PC-3 (cell line): ENCODE measurements at regions of chr7 and their contacts with region 1.

Region 1: GRCh38 chr7:47945261-47946001 is 2.8 kb downstream of the PKD1L1 start:
- DNase-seq: peak; percentile 77
- ATAC-seq: peak; percentile 52
- H3K4me3 ChIP-seq: no peak overlapping the region
- H3K27ac ChIP-seq: no peak overlapping the region
- H3K4me1 ChIP-seq: peaks cover 19% of the 10 kb centered on the region
- H3K27me3 ChIP-seq: no peaks in the 10 kb centered on the region
- CTCF ChIP-seq: peak; percentile 91

Region 2: DNA sequence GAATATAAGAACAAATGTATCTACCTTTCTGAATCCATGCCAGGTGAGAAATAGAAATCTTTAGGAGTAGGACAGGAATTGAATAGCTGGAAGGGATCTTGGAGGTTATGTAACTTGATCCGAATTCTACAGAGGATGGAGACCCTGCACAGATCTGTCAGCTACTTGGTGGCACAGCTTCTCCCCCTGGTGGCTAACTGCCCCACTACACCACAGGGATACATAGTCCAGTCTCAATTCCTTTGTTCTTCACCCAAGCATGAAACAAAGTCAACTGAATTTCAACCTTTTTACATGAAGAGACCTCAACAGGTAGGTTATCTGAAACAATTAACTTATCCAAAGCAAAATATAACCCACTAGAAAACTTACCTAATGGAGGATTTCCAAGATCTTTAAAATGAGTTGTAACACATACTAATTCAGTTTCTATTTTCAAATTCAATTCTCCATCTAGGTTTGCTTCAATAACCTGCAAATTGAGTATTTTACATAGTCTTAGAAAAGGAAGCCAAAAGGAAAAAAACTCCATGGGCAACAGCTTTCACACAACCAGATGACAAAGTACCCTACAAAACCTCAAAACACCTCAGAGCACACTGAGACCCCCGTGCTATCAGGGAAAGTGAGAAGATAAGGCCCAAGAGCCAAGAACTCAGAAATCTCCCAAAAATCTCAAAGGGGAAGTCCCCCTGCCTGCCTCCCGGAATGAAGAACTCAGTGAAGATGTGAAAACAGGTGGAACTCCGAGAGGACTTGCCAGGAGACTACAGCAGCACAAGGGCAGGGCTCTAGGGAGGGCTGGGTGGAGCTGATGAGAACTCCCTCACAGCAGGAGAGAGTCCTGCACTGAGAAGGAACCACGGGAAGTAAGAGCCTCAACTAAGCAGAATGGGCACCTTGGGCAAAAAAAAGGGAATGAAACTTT is 23.7 kb after region 1 on chr7:
- CTCF ChIA-PET with region 1: interaction called, 8 read pairs
- POLR2A ChIA-PET with region 1: no interaction called
- intact Hi-C with region 1: loop called (anchors 1 kb)
- DNase-seq: peak; percentile 69
- ATAC-seq: peak; percentile 95
- H3K4me3 ChIP-seq: no peak overlapping the region
- H3K27ac ChIP-seq: no peak overlapping the region
- H3K4me1 ChIP-seq: peaks cover 5% of the 10 kb centered on the region; the same call in 1 of the 2 replicates
- H3K27me3 ChIP-seq: no peaks in the 10 kb centered on the region
- CTCF ChIP-seq: peak; percentile 91

Region 3: DNA sequence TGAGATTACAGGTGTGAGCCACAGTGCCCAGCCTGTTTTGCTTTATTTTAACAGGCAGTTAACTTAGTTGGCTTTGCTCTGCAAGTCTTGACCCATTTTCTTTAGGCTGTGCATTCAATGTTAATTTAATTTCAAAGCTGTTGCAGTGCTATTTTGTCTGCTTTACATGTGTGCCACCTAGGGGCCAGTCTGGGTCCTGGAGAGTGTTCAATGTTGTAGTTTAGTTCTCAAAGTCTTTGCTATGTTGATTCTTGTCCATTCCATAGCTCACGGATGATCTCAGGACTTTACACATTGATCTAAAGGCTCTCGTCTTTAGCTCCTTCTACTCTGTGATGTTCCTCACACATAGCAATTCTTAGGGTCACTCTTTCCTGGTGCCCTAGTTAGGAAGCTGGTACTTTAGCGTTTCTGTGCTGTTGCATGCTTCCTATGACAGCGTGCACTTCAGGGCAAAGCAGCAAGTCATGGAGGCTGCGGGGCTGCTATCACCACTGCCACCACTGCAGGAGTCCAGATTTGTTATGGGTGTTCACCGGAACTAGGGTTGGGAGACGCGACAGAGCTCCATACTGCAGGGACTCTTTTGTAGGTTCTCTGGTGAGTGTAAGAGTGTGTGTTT is 209.5 kb after region 1 on chr7:
- CTCF ChIA-PET with region 1: interaction called, 18 read pairs
- POLR2A ChIA-PET with region 1: no interaction called
- intact Hi-C with region 1: loop called (anchors 1 kb)
- DNase-seq: peak; percentile 62
- ATAC-seq: peak; percentile 94
- H3K4me3 ChIP-seq: no peak overlapping the region
- H3K27ac ChIP-seq: no peak overlapping the region
- H3K4me1 ChIP-seq: 0 out of 2 replicates have a peak, but pooled peaks cover 9% of the 10 kb centered on the region
- H3K27me3 ChIP-seq: no peaks in the 10 kb centered on the region
- CTCF ChIP-seq: peak; percentile 83